T-cell (primary cell): ENCODE measurements at regions of chr20 and their contacts with region 1.

Region 1: DNA sequence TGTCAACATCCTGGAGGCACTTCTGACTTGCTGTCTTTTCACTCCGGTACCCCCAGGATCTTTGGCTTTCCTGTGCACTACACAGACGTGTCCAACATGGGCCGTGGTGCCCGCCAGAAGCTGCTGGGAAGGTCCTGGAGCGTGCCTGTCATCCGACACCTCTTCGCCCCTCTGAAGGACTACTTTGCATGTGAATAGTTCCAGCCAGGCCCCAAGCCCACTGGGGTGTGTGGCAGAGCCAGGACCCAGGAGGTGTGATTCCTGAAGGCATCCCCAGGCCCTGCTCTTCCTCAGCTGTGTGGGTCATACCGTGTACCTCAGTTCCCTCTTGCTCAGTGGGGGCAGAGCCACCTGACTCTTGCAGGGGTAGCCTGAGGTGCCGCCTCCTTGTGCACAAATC is 12.0 kb upstream of the MAPRE1 start:
- DNase-seq: no peak
- ATAC-seq: no peak
- H3K4me3 ChIP-seq: no peak overlapping the region
- H3K4me3 Mint-ChIP-seq: no peak overlapping the region
- H3K27ac ChIP-seq: no peak overlapping the region
- H3K27ac Mint-ChIP-seq: no peak overlapping the region
- H3K4me1 ChIP-seq: no peaks in the 10 kb centered on the region
- H3K4me1 Mint-ChIP-seq: no peaks in the 10 kb centered on the region
- H3K27me3 ChIP-seq: no peaks in the 10 kb centered on the region
- H3K27me3 Mint-ChIP-seq: no peaks in the 10 kb centered on the region

Region 2: DNA sequence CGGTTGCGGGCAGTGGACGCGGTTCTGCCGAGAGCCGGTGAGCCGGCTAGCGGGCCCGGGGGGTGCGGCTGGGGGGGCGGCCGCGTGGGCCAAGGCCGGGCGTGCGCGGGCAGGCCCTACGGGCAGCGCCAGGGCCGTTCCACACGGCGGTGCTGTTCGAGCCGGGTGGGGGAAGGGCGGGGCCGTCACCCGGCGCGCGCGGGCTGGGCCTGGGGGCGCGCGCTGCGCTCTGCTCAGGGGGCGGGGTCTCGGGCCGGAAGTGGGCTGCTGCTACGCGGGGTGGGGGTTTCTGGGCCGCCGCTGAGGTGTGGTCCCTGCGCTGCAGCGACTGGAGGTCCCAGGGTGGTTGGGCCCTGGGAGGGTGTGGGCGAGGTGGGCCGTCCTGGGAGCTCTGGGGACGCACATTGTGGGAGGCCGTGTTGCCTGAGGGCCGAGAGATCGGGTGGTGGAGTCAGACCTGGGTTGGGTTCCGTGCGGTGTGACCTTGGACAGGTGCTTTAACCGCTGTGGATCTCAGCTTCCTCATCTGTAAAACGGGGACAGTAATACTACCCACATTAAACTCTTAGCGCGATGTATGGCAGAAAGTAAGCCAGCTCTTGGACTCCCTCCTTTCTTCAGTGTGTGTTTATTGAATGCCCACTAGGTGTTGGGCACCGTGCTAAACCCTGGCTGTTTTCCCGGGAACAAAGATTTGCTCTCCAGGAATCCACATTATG is 12.4 kb after region 1 on chr20:
- CTCF ChIA-PET with region 1: no interaction called
- POLR2A ChIA-PET with region 1: interaction called in 1 of 2 experiments, 11 read pairs
- DNase-seq: peak in 27 of 35 experiments; percentile 55 to 91 (median 76)
- ATAC-seq: peak; percentile 77 to 87 (median 80)
- H3K4me3 ChIP-seq: peak overlapping the region; percentile 62 to 88
- H3K4me3 Mint-ChIP-seq: peak overlapping the region; percentile 89 to 96 (median 94)
- H3K27ac ChIP-seq: peak overlapping the region; percentile 89
- H3K27ac Mint-ChIP-seq: peak overlapping the region; percentile 93 to 94
- H3K4me1 ChIP-seq: peaks cover 22 to 48% of the 10 kb centered on the region in 2 experiments
- H3K4me1 Mint-ChIP-seq: peaks cover 43 to 47% (median 46%) of the 10 kb centered on the region in 3 donors
- H3K27me3 ChIP-seq: no peaks in the 10 kb centered on the region
- H3K27me3 Mint-ChIP-seq: no peaks in the 10 kb centered on the region